Activated T-helper 1 cell treated with anti-CD3 and anti-CD28 coated beads, Interleukin-12 subunit alpha, Interleukin-12 subunit beta, Interleukin-2, Interleukin-4 antibody, amounts not matched to agents 30 ng/mL and 10 ng/mL and 1 ng/mL, durations not matched to agents 14 hours and 24 hours and 36 hours (primary cell): ENCODE measurements at regions of chr21 and their contacts with region 1.

Region 1: GRCh38 chr21:37563641-37564340 is 197.2 kb downstream of the DYRK1A start:
- DNase-seq: peak; percentile 92
- H3K4me3 Mint-ChIP-seq: peak overlapping the region; percentile 89
- H3K27ac Mint-ChIP-seq: peak overlapping the region; percentile 100
- H3K4me1 Mint-ChIP-seq: peaks cover 39% of the 10 kb centered on the region
- H3K27me3 Mint-ChIP-seq: peaks cover 2% of the 10 kb centered on the region

Region 2: GRCh38 chr21:37072988-37073416 is 490.8 kb before region 1 on chr21 and contains the starts of genes PIGP and TTC3:
- intact Hi-C with region 1: loop called (anchors 1 kb)
- DNase-seq: peak; percentile 93
- H3K4me3 Mint-ChIP-seq: peak within 1 kb of the TSS; percentile 95
- H3K27ac Mint-ChIP-seq: peak within 1 kb of the TSS; percentile 95
- H3K4me1 Mint-ChIP-seq: peaks cover 50% of the 10 kb centered on the region
- H3K27me3 Mint-ChIP-seq: peaks cover 2% of the 10 kb centered on the region
- total RNA-seq, gene PIGP: 18.2 and 20.1 TPM in 2 replicates
- total RNA-seq, gene TTC3: 61.8 and 69.3 TPM in 2 replicates

Region 3: GRCh38 chr21:37267269-37268184 is 296.3 kb before region 1 on chr21 and contains the start of gene VPS26C:
- intact Hi-C with region 1: loop called (anchors 1 kb)
- DNase-seq: peak; percentile 99
- H3K4me3 Mint-ChIP-seq: peak within 1 kb of the TSS; percentile 97
- H3K27ac Mint-ChIP-seq: peak within 1 kb of the TSS; percentile 98
- H3K4me1 Mint-ChIP-seq: peaks cover 51% of the 10 kb centered on the region
- H3K27me3 Mint-ChIP-seq: peaks cover 8% of the 10 kb centered on the region
- total RNA-seq, gene VPS26C: 53.8 and 58.9 TPM in 2 replicates

Region 4: GRCh38 chr21:37463083-37463801 is 100.5 kb before region 1 on chr21:
- intact Hi-C with region 1: loop called (anchors 2 kb)
- DNase-seq: peak; percentile 14
- H3K4me3 Mint-ChIP-seq: no peak overlapping the region
- H3K27ac Mint-ChIP-seq: peak overlapping the region; percentile 21
- H3K4me1 Mint-ChIP-seq: peaks cover 56% of the 10 kb centered on the region
- H3K27me3 Mint-ChIP-seq: no peaks in the 10 kb centered on the region

Region 5: DNA sequence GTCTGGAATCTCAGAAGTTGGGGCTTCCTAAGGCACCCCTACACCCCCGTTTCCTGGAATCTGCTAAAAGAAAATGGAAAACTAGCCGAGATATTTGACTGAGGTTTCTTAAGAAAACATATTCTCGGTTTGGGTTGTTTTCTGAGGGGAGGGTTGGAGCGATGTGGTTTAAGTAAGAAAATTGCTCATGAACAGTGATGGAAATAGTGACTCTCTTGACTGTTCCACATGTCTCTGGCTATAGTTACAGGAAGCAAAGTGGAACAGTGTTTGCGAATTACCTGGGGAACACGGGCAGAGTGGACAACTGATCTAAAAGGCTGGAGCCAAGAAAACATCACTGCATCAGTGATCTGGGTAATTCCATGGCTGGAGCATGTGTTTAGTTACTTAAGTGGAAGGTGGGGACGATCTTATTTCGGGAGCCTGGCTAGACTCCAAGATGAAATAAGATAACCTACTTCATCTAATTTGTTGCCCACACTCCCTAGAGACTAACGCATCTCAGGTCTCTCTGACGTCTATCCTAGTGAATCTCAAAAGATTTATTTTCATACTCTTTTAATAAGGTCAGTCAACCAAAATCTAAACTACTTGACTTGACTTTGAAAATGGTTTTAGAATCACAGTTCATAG is 785.4 kb after region 1 on chr21:
- intact Hi-C with region 1: loop called (anchors 1 kb)
- DNase-seq: no peak
- H3K4me3 Mint-ChIP-seq: no peak overlapping the region
- H3K27ac Mint-ChIP-seq: peak overlapping the region; percentile 91
- H3K4me1 Mint-ChIP-seq: peaks cover 37% of the 10 kb centered on the region
- H3K27me3 Mint-ChIP-seq: peaks cover 3% of the 10 kb centered on the region